IMR-90 (cell line): ENCODE measurements at regions of chr11 and their contacts with region 1.

Region 1: DNA sequence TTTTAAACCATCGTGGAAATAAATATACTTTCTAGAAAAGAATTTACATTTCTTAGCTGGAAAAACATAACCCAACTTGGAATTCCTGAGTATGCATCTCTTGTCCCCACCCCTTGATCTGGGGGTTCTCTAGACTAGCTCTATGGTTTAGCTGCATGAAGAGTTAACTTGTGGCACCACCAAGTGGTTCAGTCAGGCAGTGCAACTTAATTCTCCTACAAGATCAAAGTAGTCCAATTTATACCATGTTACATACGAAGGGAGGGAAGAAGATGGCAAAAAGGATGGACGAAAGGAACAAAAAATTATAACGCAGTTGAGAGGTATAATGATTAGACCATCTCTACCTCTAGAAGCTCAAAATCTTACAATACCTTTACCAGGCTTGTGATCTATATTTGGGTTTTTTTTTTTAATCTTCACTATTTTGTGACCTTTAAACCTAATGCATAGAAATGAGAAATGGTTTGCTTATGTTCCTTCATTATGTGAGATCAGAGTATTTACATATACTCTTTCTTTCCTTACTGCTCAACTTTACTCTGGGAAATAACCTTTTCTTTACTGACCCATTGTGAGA is 28.5 kb upstream of the ALKBH3 start:
- DNase-seq: peak; percentile 88
- ATAC-seq: peak; percentile 100
- H3K4me3 ChIP-seq: no peak overlapping the region
- H3K27ac ChIP-seq: no peak overlapping the region
- H3K4me1 ChIP-seq: no peaks in the 10 kb centered on the region
- H3K27me3 ChIP-seq: no peaks in the 10 kb centered on the region
- CTCF ChIP-seq: peak; percentile 92
- POLR2A ChIP-seq: no peak
- RAD21 ChIP-seq: peak; percentile 96

Region 2: GRCh38 chr11:43459246-43459645 is 392.9 kb before region 1 on chr11:
- CTCF ChIA-PET with region 1: no interaction called
- POLR2A ChIA-PET with region 1: no interaction called
- dilution Hi-C with region 1: no loop called
- in situ Hi-C with region 1: no loop called
- intact Hi-C with region 1: loop called (anchors 10 kb)
- DNase-seq: no peak
- ATAC-seq: no peak
- H3K4me3 ChIP-seq: no peak overlapping the region
- H3K27ac ChIP-seq: no peak overlapping the region
- H3K4me1 ChIP-seq: no peaks in the 10 kb centered on the region
- H3K27me3 ChIP-seq: no peaks in the 10 kb centered on the region
- CTCF ChIP-seq: no peak
- POLR2A ChIP-seq: no peak
- RAD21 ChIP-seq: no peak

Region 3: DNA sequence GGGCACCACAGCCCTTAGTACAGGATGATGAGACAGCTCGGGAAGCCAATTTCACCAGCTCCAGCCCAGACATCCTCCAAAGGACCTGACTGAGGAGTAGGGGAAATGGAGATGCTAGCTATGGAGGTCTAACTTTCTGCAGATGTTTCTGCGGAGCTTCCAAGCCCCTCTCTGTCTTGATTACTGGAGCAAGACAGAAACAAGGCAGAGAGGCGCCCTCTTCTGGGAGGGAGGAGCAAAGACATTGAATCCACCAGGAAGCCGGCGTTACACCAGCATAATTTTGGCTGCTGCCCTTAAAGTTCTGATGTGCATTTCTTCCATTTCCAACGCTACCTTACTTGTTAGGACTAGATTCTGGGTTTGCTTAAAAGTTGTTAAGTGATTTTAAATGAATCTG is 278.9 kb before region 1 on chr11:
- CTCF ChIA-PET with region 1: no interaction called
- POLR2A ChIA-PET with region 1: no interaction called
- dilution Hi-C with region 1: no loop called
- in situ Hi-C with region 1: loop called (anchors 10 kb)
- intact Hi-C with region 1: loop called (anchors 1 kb)
- DNase-seq: no peak
- ATAC-seq: no peak
- H3K4me3 ChIP-seq: no peak overlapping the region
- H3K27ac ChIP-seq: no peak overlapping the region
- H3K4me1 ChIP-seq: no peaks in the 10 kb centered on the region
- H3K27me3 ChIP-seq: peaks cover 74% of the 10 kb centered on the region
- CTCF ChIP-seq: peak; percentile 40
- POLR2A ChIP-seq: no peak
- RAD21 ChIP-seq: peak; percentile 23; the same call in 1 of the 2 replicates

Region 4: DNA sequence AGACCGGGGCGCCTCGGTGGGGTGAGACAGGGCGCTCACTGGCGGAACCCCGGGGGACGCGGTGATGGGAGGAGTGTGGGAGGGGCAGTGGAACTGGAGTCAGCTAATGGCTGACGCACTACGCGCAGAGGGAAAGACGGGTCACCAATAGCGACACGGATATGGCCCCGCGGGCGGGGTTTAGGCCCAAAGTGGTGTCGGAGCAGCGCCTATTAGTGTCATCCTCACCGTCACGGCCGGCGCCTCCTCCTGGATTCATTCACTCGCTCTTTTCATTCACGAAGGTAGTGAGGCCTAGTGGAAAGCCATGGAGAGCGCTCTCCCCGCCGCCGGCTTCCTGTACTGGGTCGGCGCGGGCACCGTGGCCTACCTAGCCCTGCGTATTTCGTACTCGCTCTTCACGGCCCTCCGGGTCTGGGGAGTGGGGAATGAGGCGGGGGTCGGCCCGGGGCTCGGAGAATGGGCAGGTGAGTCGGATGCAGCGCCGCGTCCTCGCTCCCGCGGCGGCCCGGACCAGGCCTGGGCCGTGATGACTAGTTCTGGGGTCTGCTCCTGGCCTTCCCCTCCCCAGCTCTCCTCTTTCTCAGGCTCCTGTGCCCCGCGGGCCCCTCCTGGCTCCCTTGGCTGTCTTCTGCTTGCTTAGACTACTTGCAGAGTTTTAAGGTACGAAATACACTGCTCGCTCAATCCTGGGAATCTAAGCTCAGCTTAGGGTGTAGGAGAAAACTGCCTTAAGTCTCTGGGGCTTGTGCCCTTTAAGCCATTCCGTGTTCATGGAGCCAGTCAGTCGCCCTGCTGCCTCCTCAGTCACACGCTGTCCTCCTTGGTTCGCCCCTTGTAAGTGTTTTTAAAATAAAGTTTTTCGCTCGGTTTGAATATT is 171.4 kb before region 1 on chr11 and contains the start of gene HSD17B12:
- CTCF ChIA-PET with region 1: interaction called, 3 read pairs
- POLR2A ChIA-PET with region 1: no interaction called
- dilution Hi-C with region 1: no loop called
- in situ Hi-C with region 1: no loop called
- intact Hi-C with region 1: loop called (anchors 1 kb)
- DNase-seq: peak; percentile 99
- ATAC-seq: peak; percentile 99
- H3K4me3 ChIP-seq: peak within 1 kb of the TSS; percentile 65
- H3K27ac ChIP-seq: peak within 1 kb of the TSS; percentile 20
- H3K4me1 ChIP-seq: no peaks in the 10 kb centered on the region; the same call in 1 of the 2 replicates
- H3K27me3 ChIP-seq: peaks cover under 1% of the 10 kb centered on the region; the same call in 1 of the 2 replicates
- CTCF ChIP-seq: no peak
- POLR2A ChIP-seq: peak; percentile 96
- RAD21 ChIP-seq: no peak
- total RNA-seq, gene HSD17B12: 44.6 and 61.1 TPM in 2 replicates

Region 5: DNA sequence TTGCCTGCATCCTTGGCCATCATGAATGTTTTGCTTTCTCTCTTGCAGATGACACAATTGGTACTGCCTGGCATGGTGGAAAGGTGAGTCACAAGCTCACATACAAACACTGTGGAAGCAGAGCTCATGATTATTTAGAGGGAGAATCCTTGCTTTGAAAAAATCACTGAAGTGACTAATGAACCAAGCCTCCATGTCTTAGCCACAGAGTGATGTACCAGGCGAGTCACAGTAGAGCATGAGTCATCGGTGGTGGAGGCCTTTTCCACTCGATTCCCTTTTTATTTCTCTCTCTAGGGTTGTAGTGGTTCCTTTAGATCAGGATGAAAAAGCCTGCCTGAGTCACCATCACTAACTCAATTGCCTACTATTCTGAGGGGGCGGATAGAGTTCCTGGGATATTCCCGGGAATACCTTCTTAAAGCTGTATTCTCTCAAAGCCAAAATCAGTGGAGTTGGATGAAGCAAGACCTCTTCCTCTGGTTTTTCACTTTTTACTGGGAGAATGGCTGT is 21.2 kb before region 1 on chr11:
- CTCF ChIA-PET with region 1: interaction called, 26 read pairs
- POLR2A ChIA-PET with region 1: no interaction called
- dilution Hi-C with region 1: no loop called
- in situ Hi-C with region 1: no loop called
- intact Hi-C with region 1: no loop called
- DNase-seq: peak; percentile 100
- ATAC-seq: peak; percentile 94
- H3K4me3 ChIP-seq: no peak overlapping the region
- H3K27ac ChIP-seq: peak overlapping the region; percentile 14; the same call in 1 of the 2 replicates
- H3K4me1 ChIP-seq: peaks cover 6% of the 10 kb centered on the region; the same call in 1 of the 2 replicates
- H3K27me3 ChIP-seq: no peaks in the 10 kb centered on the region
- CTCF ChIP-seq: no peak
- POLR2A ChIP-seq: no peak
- RAD21 ChIP-seq: no peak